K562 (cell line): ENCODE measurements at regions of chr4 and their contacts with region 1.

Region 1: GRCh38 chr4:162497564-162498167 is 333.9 kb upstream of the FSTL5 start:
- DNase-seq: peak; percentile 1 to 5 (median 4)
- ATAC-seq: no peak
- H3K4me3 ChIP-seq: no peak overlapping the region
- H3K27ac ChIP-seq: no peak overlapping the region
- H3K4me1 ChIP-seq: no peaks in the 10 kb centered on the region
- H3K27me3 ChIP-seq: no peaks in the 10 kb centered on the region
- CTCF ChIP-seq: peak; percentile 25 to 47 (median 38); a peak in 3 of 6 replicates
- EP300 ChIP-seq: no peak
- POLR2A ChIP-seq: no peak
- RAD21 ChIP-seq: peak; percentile 42 to 56; a peak in 3 of 4 replicates

Region 2: GRCh38 chr4:162661913-162662312 is 164.2 kb after region 1 on chr4:
- CTCF ChIA-PET with region 1: no interaction called
- POLR2A ChIA-PET with region 1: no interaction called
- in situ Hi-C with region 1: no loop called
- intact Hi-C with region 1: no loop called
- DNase-seq: no peak
- ATAC-seq: no peak
- H3K4me3 ChIP-seq: no peak overlapping the region
- H3K27ac ChIP-seq: no peak overlapping the region
- H3K4me1 ChIP-seq: no peaks in the 10 kb centered on the region
- H3K27me3 ChIP-seq: no peaks in the 10 kb centered on the region
- CTCF ChIP-seq: no peak
- EP300 ChIP-seq: no peak
- POLR2A ChIP-seq: no peak
- RAD21 ChIP-seq: no peak

Region 3: GRCh38 chr4:163042306-163042705 is 544.6 kb after region 1 on chr4:
- CTCF ChIA-PET with region 1: no interaction called
- POLR2A ChIA-PET with region 1: no interaction called
- in situ Hi-C with region 1: no loop called
- intact Hi-C with region 1: loop called (anchors 5 kb)
- DNase-seq: no peak
- ATAC-seq: no peak
- H3K4me3 ChIP-seq: no peak overlapping the region
- H3K27ac ChIP-seq: no peak overlapping the region
- H3K4me1 ChIP-seq: no peaks in the 10 kb centered on the region
- H3K27me3 ChIP-seq: no peaks in the 10 kb centered on the region
- CTCF ChIP-seq: no peak
- EP300 ChIP-seq: no peak
- POLR2A ChIP-seq: no peak
- RAD21 ChIP-seq: no peak

Region 4: GRCh38 chr4:163448516-163449197 is 951.0 kb after region 1 on chr4:
- CTCF ChIA-PET with region 1: no interaction called
- POLR2A ChIA-PET with region 1: no interaction called
- in situ Hi-C with region 1: no loop called
- intact Hi-C with region 1: no loop called
- DNase-seq: no peak
- ATAC-seq: peak; percentile 56; the same call in 2 of the 3 replicates
- H3K4me3 ChIP-seq: no peak overlapping the region
- H3K27ac ChIP-seq: no peak overlapping the region
- H3K4me1 ChIP-seq: no peaks in the 10 kb centered on the region; a peak in 1 of 5 replicates
- H3K27me3 ChIP-seq: no peaks in the 10 kb centered on the region
- CTCF ChIP-seq: no peak
- EP300 ChIP-seq: no peak
- POLR2A ChIP-seq: no peak
- RAD21 ChIP-seq: no peak

Region 5: GRCh38 chr4:163544407-163545038 is 1046.9 kb after region 1 on chr4:
- CTCF ChIA-PET with region 1: interaction called, 3 read pairs
- POLR2A ChIA-PET with region 1: no interaction called
- in situ Hi-C with region 1: no loop called
- intact Hi-C with region 1: loop called (anchors 1 kb)
- DNase-seq: peak; percentile 70 to 79 (median 74)
- ATAC-seq: peak; percentile 95
- H3K4me3 ChIP-seq: no peak overlapping the region
- H3K27ac ChIP-seq: no peak overlapping the region
- H3K4me1 ChIP-seq: no peaks in the 10 kb centered on the region
- H3K27me3 ChIP-seq: no peaks in the 10 kb centered on the region
- CTCF ChIP-seq: peak; percentile 80 to 95 (median 85)
- EP300 ChIP-seq: no peak
- POLR2A ChIP-seq: no peak
- RAD21 ChIP-seq: peak; percentile 54 to 63